ENCODE measurements at regions of chrX and their contacts with region 1.

Region 1: DNA sequence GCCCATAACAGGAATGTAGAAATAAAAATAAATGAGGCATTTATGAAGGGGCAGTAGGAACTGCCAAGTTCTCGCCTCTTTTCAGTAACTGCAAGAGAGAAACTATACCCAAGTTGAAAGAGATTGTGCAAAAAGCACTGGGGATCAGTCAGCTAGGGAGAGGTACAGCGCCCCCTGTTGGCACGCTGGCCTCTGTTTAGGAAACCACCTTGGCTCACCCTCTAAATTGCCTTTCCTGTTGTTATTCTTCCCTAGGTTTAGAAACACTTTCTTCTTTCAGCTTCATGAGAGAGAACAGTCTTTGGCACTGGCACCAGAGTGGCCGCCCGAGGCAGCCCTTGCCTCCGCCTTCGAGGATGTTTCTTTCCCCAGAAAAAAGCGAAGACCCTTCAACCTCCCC is 348.5 kb downstream of the MID1IP1 start:
- DNase-seq: no peak
- ATAC-seq: peak; percentile 76
- H3K4me3 ChIP-seq: no peak overlapping the region
- H3K27ac ChIP-seq: no peak overlapping the region
- H3K4me1 ChIP-seq: peaks cover 5% of the 10 kb centered on the region
- H3K27me3 ChIP-seq: no peaks in the 10 kb centered on the region
- CTCF ChIP-seq: peak; percentile 66 to 78 (median 74)
- EP300 ChIP-seq: no peak
- POLR2A ChIP-seq: no peak
- RAD21 ChIP-seq: peak; percentile 65

Region 2: GRCh38 chrX:38664285-38664684 is 485.5 kb before region 1 on chrX:
- CTCF ChIA-PET with region 1: interaction called, 11 read pairs
- POLR2A ChIA-PET with region 1: interaction called, 3 read pairs
- RAD21 ChIA-PET with region 1: interaction called, 3 read pairs
- SMC1A ChIA-PET with region 1: interaction called, 4 read pairs
- in situ Hi-C with region 1: loop called (anchors 10 kb)
- intact Hi-C with region 1: loop called (anchors 10 kb)
- DNase-seq: no peak
- ATAC-seq: peak; percentile 54
- H3K4me3 ChIP-seq: no peak overlapping the region
- H3K27ac ChIP-seq: no peak overlapping the region
- H3K4me1 ChIP-seq: peaks cover 8% of the 10 kb centered on the region; the same call in 1 of the 2 replicates
- H3K27me3 ChIP-seq: no peaks in the 10 kb centered on the region; a peak in 1 of 4 replicates
- CTCF ChIP-seq: peak; percentile 25 to 56 (median 33); a peak in 3 of 6 replicates
- EP300 ChIP-seq: no peak
- POLR2A ChIP-seq: no peak
- RAD21 ChIP-seq: peak; percentile 57

Region 3: DNA sequence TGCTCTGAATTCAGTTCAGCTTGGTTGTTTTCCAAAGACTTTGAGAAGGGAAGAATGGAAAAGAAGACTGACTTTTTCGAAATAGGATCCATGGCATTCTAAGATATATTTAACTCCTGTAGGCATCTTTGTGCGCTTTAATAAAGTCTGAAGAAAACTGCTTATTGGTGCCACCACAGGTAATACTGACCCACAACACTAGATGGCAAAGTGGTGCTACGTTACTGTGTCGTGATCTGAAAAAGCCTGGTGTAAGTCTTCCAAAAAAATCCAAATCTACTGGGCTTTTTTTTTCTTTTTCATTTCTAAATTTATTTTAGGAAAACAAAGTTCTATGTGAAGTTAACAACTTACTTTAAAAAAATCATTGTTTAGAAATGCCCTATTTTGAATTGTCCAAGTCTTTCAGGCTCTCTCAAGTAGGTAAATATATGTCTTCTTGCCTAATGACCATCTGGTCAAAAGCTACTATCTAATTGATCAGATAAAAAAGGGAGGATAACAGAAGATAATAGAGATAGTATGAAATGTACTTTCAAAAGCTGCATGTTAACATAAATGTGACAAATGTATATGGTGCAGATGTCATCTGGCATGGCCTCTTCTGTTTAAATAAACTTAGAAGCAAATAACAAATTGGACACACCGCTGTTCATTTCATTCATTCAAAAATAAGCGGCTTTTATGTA is 395.5 kb before region 1 on chrX:
- CTCF ChIA-PET with region 1: interaction called, 7 read pairs
- POLR2A ChIA-PET with region 1: no interaction called
- RAD21 ChIA-PET with region 1: interaction called, 3 read pairs
- SMC1A ChIA-PET with region 1: interaction called, 3 read pairs
- in situ Hi-C with region 1: no loop called
- intact Hi-C with region 1: loop called (anchors 5 kb)
- DNase-seq: peak; percentile 31
- ATAC-seq: peak; percentile 82
- H3K4me3 ChIP-seq: no peak overlapping the region
- H3K27ac ChIP-seq: no peak overlapping the region
- H3K4me1 ChIP-seq: no peaks in the 10 kb centered on the region
- H3K27me3 ChIP-seq: no peaks in the 10 kb centered on the region
- CTCF ChIP-seq: peak; percentile 59 to 70 (median 65); a peak in 5 of 6 replicates
- EP300 ChIP-seq: no peak
- POLR2A ChIP-seq: no peak
- RAD21 ChIP-seq: peak; percentile 79

Region 4: DNA sequence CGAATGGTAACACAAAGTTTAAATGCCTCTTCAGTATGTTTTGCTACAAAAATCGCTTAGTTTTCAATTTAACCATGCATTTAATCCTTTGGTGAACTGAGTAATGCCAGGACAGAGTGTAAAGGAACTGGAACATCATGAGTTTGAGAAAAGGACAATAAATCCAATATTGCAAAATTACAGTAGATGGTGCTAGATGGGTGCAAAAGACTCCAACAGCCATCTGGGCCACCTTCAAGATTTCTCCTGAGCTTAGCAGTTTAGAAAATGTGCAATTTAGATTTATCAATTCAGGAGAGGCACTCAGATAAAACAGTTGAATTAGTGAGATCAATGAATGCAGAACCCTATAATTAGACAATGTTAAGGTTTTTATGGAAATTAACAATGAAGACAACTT is 381.7 kb before region 1 on chrX:
- CTCF ChIA-PET with region 1: interaction called, 31 read pairs
- POLR2A ChIA-PET with region 1: no interaction called
- RAD21 ChIA-PET with region 1: interaction called, 22 read pairs
- SMC1A ChIA-PET with region 1: interaction called, 11 read pairs
- in situ Hi-C with region 1: loop called (anchors 5 kb)
- intact Hi-C with region 1: loop called (anchors 1 kb)
- DNase-seq: no peak
- ATAC-seq: peak; percentile 62
- H3K4me3 ChIP-seq: no peak overlapping the region
- H3K27ac ChIP-seq: no peak overlapping the region
- H3K4me1 ChIP-seq: no peaks in the 10 kb centered on the region
- H3K27me3 ChIP-seq: no peaks in the 10 kb centered on the region
- CTCF ChIP-seq: peak; percentile 30 to 57 (median 31); a peak in 4 of 6 replicates
- EP300 ChIP-seq: no peak
- POLR2A ChIP-seq: no peak
- RAD21 ChIP-seq: peak; percentile 72

Region 5: GRCh38 chrX:38803586-38804431 is 346.0 kb before region 1 on chrX:
- CTCF ChIA-PET with region 1: interaction called, 3 read pairs
- POLR2A ChIA-PET with region 1: no interaction called
- RAD21 ChIA-PET with region 1: interaction called, 3 read pairs
- SMC1A ChIA-PET with region 1: interaction called, 4 read pairs
- in situ Hi-C with region 1: no loop called
- intact Hi-C with region 1: loop called (anchors 10 kb)
- DNase-seq: no peak
- ATAC-seq: peak; percentile 78
- H3K4me3 ChIP-seq: peak overlapping the region; percentile 70
- H3K27ac ChIP-seq: peak overlapping the region; percentile 82
- H3K4me1 ChIP-seq: no peaks in the 10 kb centered on the region
- H3K27me3 ChIP-seq: no peaks in the 10 kb centered on the region
- CTCF ChIP-seq: no peak
- EP300 ChIP-seq: no peak
- POLR2A ChIP-seq: peak; percentile 84; the same call in 1 of the 2 replicates
- RAD21 ChIP-seq: no peak

Region 6: GRCh38 chrX:39133971-39134370 is 15.8 kb before region 1 on chrX:
- CTCF ChIA-PET with region 1: interaction called, 100 read pairs
- POLR2A ChIA-PET with region 1: interaction called, 3 read pairs
- RAD21 ChIA-PET with region 1: interaction called, 30 read pairs
- SMC1A ChIA-PET with region 1: interaction called, 58 read pairs
- in situ Hi-C with region 1: no loop called
- intact Hi-C with region 1: no loop called
- DNase-seq: no peak
- ATAC-seq: peak; percentile 91
- H3K4me3 ChIP-seq: no peak overlapping the region
- H3K27ac ChIP-seq: no peak overlapping the region
- H3K4me1 ChIP-seq: no peaks in the 10 kb centered on the region
- H3K27me3 ChIP-seq: no peaks in the 10 kb centered on the region
- CTCF ChIP-seq: peak; percentile 59 to 62 (median 59)
- EP300 ChIP-seq: no peak
- POLR2A ChIP-seq: no peak
- RAD21 ChIP-seq: peak; percentile 50

Region 7: GRCh38 chrX:39196192-39197102 is 46.7 kb after region 1 on chrX:
- CTCF ChIA-PET with region 1: interaction called, 14 read pairs
- POLR2A ChIA-PET with region 1: no interaction called
- RAD21 ChIA-PET with region 1: interaction called, 6 read pairs
- SMC1A ChIA-PET with region 1: interaction called, 5 read pairs
- in situ Hi-C with region 1: no loop called
- intact Hi-C with region 1: no loop called
- DNase-seq: peak; percentile 90
- ATAC-seq: peak; percentile 95
- H3K4me3 ChIP-seq: no peak overlapping the region
- H3K27ac ChIP-seq: peak overlapping the region; percentile 54
- H3K4me1 ChIP-seq: peaks cover 18% of the 10 kb centered on the region
- H3K27me3 ChIP-seq: no peaks in the 10 kb centered on the region
- CTCF ChIP-seq: no peak
- EP300 ChIP-seq: peak; percentile 49 to 80; a peak in 3 of 4 replicates
- POLR2A ChIP-seq: no peak
- RAD21 ChIP-seq: no peak